ENCODE measurements at regions of chr19 and their contacts with region 1.

Region 1: DNA sequence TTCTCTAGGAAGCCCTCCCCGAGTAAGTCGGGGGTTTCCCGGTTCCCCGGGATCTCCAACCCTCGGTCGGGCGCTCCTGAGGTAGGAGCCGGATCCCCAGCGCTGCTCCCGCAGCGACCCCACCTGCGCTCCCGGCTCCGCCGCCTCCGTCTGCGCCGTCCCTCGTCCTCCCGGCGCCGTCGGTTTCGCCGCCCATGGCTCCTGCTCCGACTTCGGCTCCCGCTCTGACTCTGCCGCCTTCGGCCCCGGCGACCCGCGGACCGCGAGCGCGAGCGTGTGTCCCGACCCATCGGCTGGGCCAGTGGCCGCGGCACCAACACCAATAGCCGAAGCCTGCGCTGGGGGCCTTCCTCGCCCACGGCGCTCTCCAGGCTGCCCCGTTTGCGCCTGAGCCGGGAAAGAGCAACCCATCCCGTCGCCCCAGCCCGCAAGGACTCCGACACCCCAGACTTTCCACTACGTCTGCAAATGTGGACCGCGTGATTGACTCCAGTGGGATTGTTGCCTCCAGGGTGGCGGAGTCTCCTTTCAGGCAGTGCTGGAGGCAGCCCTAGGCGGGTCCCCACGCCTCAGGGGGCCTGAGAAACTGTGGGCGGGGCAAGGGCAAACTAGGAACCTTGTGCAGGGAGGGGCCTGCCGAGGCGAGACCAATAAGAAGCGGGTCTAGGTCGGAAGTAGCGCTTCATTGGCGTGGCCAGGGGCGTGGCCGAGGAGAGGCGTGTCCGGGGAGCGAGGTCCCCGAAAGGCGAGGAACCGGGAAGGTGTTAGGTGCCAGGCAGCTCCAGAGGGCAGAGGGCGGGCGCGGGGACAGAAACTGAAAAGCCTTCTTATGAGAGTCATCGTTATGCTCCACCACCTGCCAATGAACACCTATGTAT is at the start of gene CACTIN:
- DNase-seq: peak; percentile 97
- H3K4me3 Mint-ChIP-seq: peak within 1 kb of the TSS; percentile 99
- H3K27ac Mint-ChIP-seq: peak within 1 kb of the TSS; percentile 96
- H3K4me1 Mint-ChIP-seq: no peaks in the 10 kb centered on the region
- H3K27me3 Mint-ChIP-seq: no peaks in the 10 kb centered on the region
- CTCF ChIP-seq: no peak
- total RNA-seq, gene CACTIN: 20.2 and 21.4 TPM in 2 replicates

Region 2: GRCh38 chr19:4241824-4242430 is 615.2 kb after region 1 on chr19:
- CTCF ChIA-PET with region 1: interaction called, 11 read pairs
- intact Hi-C with region 1: no loop called
- DNase-seq: no peak
- H3K4me3 Mint-ChIP-seq: no peak overlapping the region
- H3K27ac Mint-ChIP-seq: no peak overlapping the region
- H3K4me1 Mint-ChIP-seq: peaks cover 8% of the 10 kb centered on the region
- H3K27me3 Mint-ChIP-seq: no peaks in the 10 kb centered on the region
- CTCF ChIP-seq: no peak